ENCODE measurements at regions of chr13 and their contacts with region 1.

Region 1: DNA sequence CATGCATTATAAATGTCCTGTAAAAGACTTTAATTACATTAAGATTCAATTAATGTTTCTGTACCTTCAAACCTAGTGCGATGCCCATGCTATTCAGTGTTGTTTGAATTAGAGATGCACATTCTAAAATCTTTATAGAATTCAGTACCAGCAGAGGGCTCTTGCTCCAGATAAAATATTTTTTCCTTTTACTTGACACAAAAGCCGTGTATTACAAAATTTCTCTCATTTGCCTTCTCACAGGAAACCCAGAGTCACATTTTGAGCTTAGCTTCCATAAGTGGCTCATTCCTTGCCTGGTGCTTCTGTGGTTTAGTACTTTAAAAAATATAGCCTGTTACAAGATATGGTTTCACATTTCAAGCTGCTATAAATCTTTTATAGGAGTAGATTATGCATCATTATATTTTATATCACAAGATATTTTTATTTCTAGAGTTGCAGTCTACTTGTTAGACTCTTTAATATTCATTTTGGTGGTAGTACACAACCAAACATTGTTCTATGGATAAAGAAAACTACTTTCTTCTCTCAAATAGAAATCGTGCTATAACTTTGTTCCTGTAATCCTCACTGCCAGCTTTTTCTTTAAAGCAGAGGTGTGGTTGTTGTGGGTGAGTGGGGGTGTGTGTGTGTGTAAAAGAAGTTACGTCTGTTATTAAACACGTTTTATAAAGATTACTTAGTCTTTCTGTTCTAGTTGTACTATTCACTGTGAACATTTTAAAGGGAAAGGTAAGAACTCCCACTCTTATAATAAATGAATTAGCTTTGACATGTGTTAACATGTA is 101.4 kb downstream of the RNF17 start:
- DNase-seq: no peak
- H3K4me3 ChIP-seq: no peak overlapping the region
- H3K27ac ChIP-seq: no peak overlapping the region
- H3K4me1 ChIP-seq: no peaks in the 10 kb centered on the region
- H3K27me3 ChIP-seq: no peaks in the 10 kb centered on the region
- CTCF ChIP-seq: peak; percentile 36

Region 2: DNA sequence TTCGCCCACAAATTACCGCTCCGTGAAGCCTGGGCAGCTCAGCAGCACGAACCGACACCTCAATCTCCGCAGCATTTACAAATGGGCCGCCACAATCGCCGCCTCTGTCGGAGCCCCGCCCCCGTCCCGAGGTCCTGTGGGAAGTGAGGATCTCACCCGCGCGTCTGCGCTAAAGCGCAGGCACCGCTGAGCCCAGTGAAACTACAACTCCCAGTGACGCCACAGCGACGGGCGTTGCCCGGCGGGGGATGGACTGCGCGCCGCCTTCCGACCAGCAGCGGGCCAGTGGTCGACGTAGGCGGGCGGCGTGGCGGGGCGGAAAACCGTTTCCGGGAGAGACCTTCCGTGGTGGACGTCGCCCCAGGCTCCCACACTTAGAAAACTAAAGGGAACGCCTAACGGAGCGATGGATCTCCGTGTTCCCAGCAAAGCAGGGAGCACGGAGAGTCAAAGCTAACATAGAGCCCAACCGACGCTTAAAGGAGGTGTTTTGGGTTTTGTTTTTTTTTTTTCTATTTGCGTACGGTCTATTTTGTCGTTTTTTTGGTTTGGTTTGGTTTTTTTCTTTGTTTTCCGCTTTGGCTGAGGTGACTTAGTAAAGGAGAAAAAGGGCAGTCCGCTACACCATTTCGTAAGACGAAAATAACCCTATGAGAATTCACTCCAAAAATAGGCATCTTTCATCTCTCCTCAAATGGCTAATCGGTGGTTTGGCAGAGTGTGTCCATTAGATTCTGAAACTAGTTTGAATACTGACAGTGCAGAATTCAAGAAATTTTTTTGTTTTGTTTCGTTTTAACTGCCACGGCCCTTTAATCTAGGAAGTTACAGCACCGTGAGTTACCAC is 57.6 kb after region 1 on chr13:
- CTCF ChIA-PET with region 1: no interaction called
- POLR2A ChIA-PET with region 1: interaction called, 15 read pairs
- intact Hi-C with region 1: no loop called
- DNase-seq: peak; percentile 92 to 94
- H3K4me3 ChIP-seq: peak overlapping the region; percentile 95
- H3K27ac ChIP-seq: peak overlapping the region; percentile 89
- H3K4me1 ChIP-seq: peaks cover 16% of the 10 kb centered on the region; the same call in 1 of the 2 replicates
- H3K27me3 ChIP-seq: no peaks in the 10 kb centered on the region
- CTCF ChIP-seq: peak; percentile 24; the same call in 1 of the 2 replicates

Measured in PC-9 (cell line).